ENCODE measurements at regions of chr9 and their contacts with region 1.

Region 1: GRCh38 chr9:130712564-130713285 is 19.1 kb downstream of the EXOSC2 start:
- DNase-seq: peak; percentile 97
- ATAC-seq: peak; percentile 97
- H3K4me3 ChIP-seq: peak overlapping the region; percentile 53 to 94 (median 88)
- H3K4me3 Mint-ChIP-seq: peak overlapping the region; percentile 92
- H3K27ac ChIP-seq: peak overlapping the region; percentile 92 to 98
- H3K27ac Mint-ChIP-seq: peak overlapping the region; percentile 95
- H3K4me1 ChIP-seq: peaks cover 24 to 33% of the 10 kb centered on the region in 2 donors
- H3K4me1 Mint-ChIP-seq: peaks cover 33% of the 10 kb centered on the region
- H3K27me3 ChIP-seq: no peaks in the 10 kb centered on the region
- H3K27me3 Mint-ChIP-seq: no peaks in the 10 kb centered on the region
- CTCF ChIP-seq: no peak

Region 2: DNA sequence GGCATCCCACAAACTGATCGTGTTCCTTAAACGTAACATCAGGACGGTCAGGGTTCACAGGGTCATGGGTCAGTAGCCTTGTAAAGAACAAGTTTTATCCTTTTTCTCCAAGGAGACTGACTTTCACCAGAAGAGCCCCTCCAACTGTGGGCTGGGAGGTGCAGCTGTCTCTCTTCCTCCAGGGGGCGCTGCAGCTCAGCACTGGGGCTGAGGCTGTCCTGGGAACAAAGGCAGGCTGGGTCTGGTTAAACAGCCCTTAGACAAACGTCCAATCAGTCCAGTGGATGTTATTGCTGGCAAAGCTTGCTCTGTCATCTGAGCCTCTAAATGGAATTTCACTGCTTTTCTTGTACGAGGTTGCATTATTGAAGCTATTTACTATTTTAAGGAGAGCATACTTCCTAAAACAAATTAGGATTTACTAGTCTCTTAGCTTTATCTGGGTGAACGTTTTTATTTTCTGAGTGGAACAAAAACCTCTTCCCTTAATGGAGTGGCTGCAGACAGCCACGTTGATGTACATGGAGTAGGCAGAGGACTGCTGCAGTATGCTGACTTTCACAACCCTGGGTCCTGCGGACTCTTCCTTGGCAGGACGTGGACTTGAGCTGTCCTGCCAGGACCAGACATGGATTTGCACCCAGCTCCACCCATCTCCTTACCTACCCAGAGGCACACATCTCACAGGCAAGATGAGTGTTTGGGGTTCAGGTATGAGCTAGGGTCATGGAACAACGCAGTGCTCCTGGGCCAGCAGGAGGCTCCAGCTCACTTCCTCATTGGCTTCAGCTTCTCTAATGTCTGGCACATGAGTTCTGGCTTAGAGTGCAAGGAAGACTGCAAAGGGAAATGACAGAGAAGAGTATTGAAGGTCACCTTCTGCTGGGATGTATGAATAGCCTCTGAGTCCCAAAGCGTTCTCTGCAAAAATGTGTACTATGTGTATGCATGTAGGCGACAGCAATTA is 11.4 kb before region 1 on chr9:
- CTCF ChIA-PET with region 1: interaction called, 19 read pairs
- POLR2A ChIA-PET with region 1: interaction called, 5 read pairs
- intact Hi-C with region 1: no loop called
- DNase-seq: peak; percentile 73
- ATAC-seq: peak; percentile 67
- H3K4me3 ChIP-seq: no peak overlapping the region
- H3K4me3 Mint-ChIP-seq: no peak overlapping the region
- H3K27ac ChIP-seq: no peak overlapping the region
- H3K27ac Mint-ChIP-seq: no peak overlapping the region
- H3K4me1 ChIP-seq: no peaks in the 10 kb centered on the region
- H3K4me1 Mint-ChIP-seq: peaks cover 15% of the 10 kb centered on the region
- H3K27me3 ChIP-seq: no peaks in the 10 kb centered on the region
- H3K27me3 Mint-ChIP-seq: no peaks in the 10 kb centered on the region
- CTCF ChIP-seq: peak; percentile 96

Region 3: GRCh38 chr9:130901498-130902203 is 188.9 kb after region 1 on chr9:
- CTCF ChIA-PET with region 1: no interaction called
- POLR2A ChIA-PET with region 1: no interaction called
- intact Hi-C with region 1: no loop called
- DNase-seq: no peak
- ATAC-seq: no peak
- H3K4me3 ChIP-seq: no peak overlapping the region
- H3K4me3 Mint-ChIP-seq: no peak overlapping the region
- H3K27ac ChIP-seq: no peak overlapping the region
- H3K27ac Mint-ChIP-seq: no peak overlapping the region
- H3K4me1 ChIP-seq: no peaks in the 10 kb centered on the region
- H3K4me1 Mint-ChIP-seq: no peaks in the 10 kb centered on the region
- H3K27me3 ChIP-seq: peaks cover 0 to 8% (median 0%) of the 10 kb centered on the region in 4 experiments
- H3K27me3 Mint-ChIP-seq: no peaks in the 10 kb centered on the region
- CTCF ChIP-seq: no peak

Region 4: DNA sequence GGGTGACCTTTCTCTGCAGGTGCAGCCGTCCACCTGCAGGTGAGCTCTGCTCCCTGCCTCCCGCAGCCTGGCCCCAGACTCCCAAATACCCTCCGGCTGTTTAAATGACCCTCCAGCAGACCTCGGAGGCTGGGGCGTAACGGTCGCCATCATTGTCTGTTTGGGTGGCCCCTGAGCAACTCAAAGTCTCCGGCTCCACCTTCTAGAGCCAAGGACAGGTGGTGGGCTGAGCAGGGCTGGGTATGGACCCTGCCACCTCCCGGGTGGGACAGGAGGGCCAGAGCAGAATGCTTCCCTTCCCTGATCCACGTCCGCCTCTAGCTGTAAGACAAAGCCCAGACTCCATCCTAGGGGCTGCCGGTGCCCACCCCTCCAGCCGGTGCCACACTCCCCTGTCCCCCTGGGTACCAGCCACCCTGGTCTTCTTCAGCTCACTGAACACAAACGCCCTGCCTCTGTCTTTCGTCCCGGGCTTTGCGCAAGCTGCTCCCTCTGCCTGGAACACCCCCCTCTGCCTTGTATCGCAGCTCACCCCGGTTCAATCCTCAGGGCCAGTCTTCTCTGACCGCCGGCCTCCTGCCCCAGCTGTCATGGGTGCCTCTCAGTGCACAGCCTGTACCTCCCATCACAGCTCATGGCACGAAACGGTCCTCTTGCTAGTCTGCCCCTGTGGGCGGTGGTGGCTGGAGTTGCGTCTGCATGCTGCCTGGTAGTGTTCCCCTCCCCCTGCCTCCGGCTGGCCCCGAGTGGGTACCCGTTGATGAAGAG is 260.6 kb after region 1 on chr9:
- CTCF ChIA-PET with region 1: no interaction called
- POLR2A ChIA-PET with region 1: no interaction called
- intact Hi-C with region 1: no loop called
- DNase-seq: no peak
- ATAC-seq: no peak
- H3K4me3 ChIP-seq: no peak overlapping the region
- H3K4me3 Mint-ChIP-seq: no peak overlapping the region
- H3K27ac ChIP-seq: no peak overlapping the region
- H3K27ac Mint-ChIP-seq: no peak overlapping the region
- H3K4me1 ChIP-seq: no peaks in the 10 kb centered on the region
- H3K4me1 Mint-ChIP-seq: no peaks in the 10 kb centered on the region
- H3K27me3 ChIP-seq: peaks cover 0 to 11% (median 0%) of the 10 kb centered on the region in 4 experiments
- H3K27me3 Mint-ChIP-seq: peaks cover 18% of the 10 kb centered on the region
- CTCF ChIP-seq: no peak

Region 5: GRCh38 chr9:131125128-131126058 is 412.7 kb after region 1 on chr9 and contains the start of gene NUP214:
- CTCF ChIA-PET with region 1: no interaction called
- POLR2A ChIA-PET with region 1: no interaction called
- intact Hi-C with region 1: loop called (anchors 5 kb)
- DNase-seq: peak; percentile 99
- ATAC-seq: peak; percentile 99
- H3K4me3 ChIP-seq: peak within 1 kb of the TSS; percentile 76 to 89 (median 86)
- H3K4me3 Mint-ChIP-seq: peak within 1 kb of the TSS; percentile 99
- H3K27ac ChIP-seq: peak within 1 kb of the TSS; percentile 73 to 88
- H3K27ac Mint-ChIP-seq: peak within 1 kb of the TSS; percentile 100
- H3K4me1 ChIP-seq: peaks cover 14 to 17% of the 10 kb centered on the region in 2 donors
- H3K4me1 Mint-ChIP-seq: peaks cover 27% of the 10 kb centered on the region
- H3K27me3 ChIP-seq: no peaks in the 10 kb centered on the region
- H3K27me3 Mint-ChIP-seq: peaks cover 3% of the 10 kb centered on the region
- CTCF ChIP-seq: no peak
- total RNA-seq, gene NUP214: 94.6 and 103 TPM in 2 replicates